ENCODE measurements at regions of chr10 and their contacts with region 1.

Region 1: DNA sequence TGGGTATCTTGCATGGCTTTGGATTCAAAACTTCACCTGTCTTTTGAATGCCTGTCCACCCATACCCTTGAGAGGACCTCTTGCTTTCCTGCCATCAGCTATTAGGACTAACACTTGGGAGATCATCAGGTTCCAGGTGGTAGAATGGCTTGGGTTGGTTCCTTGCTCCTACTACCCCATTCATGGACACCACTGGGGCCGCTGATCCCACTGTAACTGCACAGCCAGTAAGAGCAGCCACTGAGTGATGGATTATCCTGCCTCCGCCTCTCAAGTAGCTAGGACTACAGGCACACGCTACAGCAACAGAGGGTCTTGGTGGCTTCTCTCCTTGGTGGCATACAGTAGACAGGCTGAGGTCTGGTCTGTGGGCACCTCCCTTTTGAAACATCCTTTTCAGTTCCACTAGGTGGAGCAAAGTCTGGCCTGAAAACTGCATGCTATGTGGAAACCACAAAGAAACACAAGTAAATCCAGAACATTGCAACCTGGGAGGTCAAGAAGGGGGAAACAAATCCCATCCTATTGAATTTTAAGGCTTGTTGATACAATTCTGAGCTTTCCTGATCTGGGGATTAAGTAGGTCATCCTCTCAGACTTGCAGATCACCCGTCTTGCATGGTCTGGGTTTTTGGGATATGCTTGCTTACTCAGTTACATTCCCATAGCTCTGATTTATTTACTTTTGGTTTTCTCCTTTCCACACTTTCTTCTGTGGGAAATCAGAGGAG is 9.4 kb downstream of the WBP1L start:
- DNase-seq: peak; percentile 49 to 74 (median 71)
- H3K4me3 ChIP-seq: no peak overlapping the region
- H3K27ac ChIP-seq: no peak overlapping the region
- H3K4me1 ChIP-seq: peaks cover 0 to 10% (median 5%) of the 10 kb centered on the region in 4 experiments
- H3K27me3 ChIP-seq: no peaks in the 10 kb centered on the region

Region 2: GRCh38 chr10:102660888-102661657 is 92.0 kb before region 1 on chr10:
- CTCF ChIA-PET with region 1: no interaction called
- POLR2A ChIA-PET with region 1: no interaction called
- DNase-seq: peak; percentile 61 to 88 (median 85)
- H3K4me3 ChIP-seq: peak overlapping the region in 4 of 7 experiments; percentile 25 to 55 (median 39)
- H3K27ac ChIP-seq: no peak overlapping the region
- H3K4me1 ChIP-seq: peaks cover 2 to 35% (median 28%) of the 10 kb centered on the region in 4 experiments
- H3K27me3 ChIP-seq: no peaks in the 10 kb centered on the region

Region 3: DNA sequence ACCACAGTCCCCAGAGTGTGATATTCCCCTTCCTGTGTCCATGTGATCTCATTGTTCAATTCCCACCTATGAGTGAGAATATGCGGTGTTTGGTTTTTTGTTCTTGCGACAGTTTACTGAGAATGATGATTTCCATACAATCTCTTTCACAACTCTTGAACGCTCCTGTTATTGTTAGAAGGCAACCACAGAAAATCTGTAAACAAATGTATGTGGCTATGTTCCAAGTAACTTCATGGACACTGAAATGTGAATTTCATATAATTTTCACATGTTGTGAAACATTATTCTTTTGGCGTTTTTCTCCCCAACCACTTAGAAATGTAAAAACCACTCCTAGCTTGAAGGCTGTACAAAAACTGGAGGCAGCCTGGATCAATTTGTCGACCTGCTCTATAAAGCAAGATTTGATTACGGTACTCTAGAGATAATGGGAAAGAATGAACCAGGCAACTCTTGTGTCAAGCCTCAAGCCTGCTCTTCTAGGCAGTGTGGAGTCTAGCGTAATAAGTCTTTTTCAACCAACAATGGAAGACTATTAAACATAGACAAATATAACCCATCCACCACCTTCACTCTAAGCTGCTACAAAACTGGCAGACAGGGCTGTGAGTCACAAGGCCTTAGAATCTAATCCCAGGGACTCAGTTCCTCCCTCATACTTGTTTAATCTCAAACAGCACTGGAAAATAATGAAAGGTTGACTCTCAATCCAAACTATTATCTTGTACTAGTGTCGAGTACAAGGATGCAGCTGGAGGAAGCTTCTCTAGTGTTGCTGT is 61.6 kb before region 1 on chr10:
- CTCF ChIA-PET with region 1: no interaction called
- POLR2A ChIA-PET with region 1: no interaction called
- DNase-seq: no peak
- H3K4me3 ChIP-seq: no peak overlapping the region
- H3K27ac ChIP-seq: no peak overlapping the region
- H3K4me1 ChIP-seq: no peaks in the 10 kb centered on the region
- H3K27me3 ChIP-seq: no peaks in the 10 kb centered on the region

Region 4: GRCh38 chr10:102738692-102739121 is 14.4 kb before region 1 on chr10:
- CTCF ChIA-PET with region 1: interaction called, 34 read pairs
- POLR2A ChIA-PET with region 1: no interaction called
- DNase-seq: peak; percentile 36 to 85 (median 75)
- H3K4me3 ChIP-seq: peak overlapping the region in 3 of 7 experiments; percentile 25 to 50 (median 30)
- H3K27ac ChIP-seq: peak overlapping the region in 1 of 2 experiments; percentile 1
- H3K4me1 ChIP-seq: peaks cover 14 to 73% (median 39%) of the 10 kb centered on the region in 4 experiments
- H3K27me3 ChIP-seq: no peaks in the 10 kb centered on the region

Region 5: DNA sequence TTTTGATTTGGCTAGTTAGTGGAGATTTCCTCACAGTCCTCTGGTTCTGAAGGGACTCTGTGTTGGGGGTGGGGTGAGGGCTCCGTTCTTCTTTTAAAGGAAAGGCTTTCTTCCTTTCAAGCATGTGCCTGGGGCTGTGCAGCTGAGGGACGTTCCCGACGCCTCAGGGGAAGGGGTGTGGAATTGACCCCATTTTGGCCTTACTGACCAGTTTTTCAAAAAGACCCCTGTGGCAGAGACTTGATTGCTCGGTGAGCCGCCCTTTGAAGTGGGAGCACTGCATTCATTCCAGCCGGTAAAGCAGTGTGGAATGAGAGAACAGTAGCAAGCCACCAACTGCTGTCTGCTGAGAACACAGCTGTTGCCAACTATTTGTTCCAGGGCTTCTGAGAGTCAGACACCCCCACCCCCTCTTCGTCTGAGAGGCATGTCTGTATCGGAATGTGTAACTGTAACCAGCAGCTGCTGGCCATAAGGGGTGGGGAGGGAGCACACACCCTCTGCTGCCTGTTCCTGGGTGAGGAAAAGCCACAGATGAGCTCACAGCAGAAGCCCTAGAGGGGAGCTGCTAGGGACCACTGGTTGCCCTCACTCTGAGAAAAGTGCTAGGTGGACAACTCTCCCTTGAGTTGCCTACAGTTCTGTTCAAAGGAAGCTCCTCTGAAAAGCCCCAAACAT is 23.8 kb after region 1 on chr10:
- CTCF ChIA-PET with region 1: interaction called, 60 read pairs
- POLR2A ChIA-PET with region 1: interaction called, 3 read pairs
- DNase-seq: peak in 2 of 3 donors; percentile 29 to 54
- H3K4me3 ChIP-seq: peak overlapping the region in 1 of 7 experiments; percentile 33
- H3K27ac ChIP-seq: peak overlapping the region in 1 of 2 experiments; percentile 68
- H3K4me1 ChIP-seq: peaks cover 12 to 58% (median 48%) of the 10 kb centered on the region in 4 experiments
- H3K27me3 ChIP-seq: no peaks in the 10 kb centered on the region

Region 6: GRCh38 chr10:102835007-102835482 is 81.9 kb after region 1 on chr10:
- CTCF ChIA-PET with region 1: interaction called, 26 read pairs
- POLR2A ChIA-PET with region 1: no interaction called
- DNase-seq: peak; percentile 78 to 89 (median 83)
- H3K4me3 ChIP-seq: no peak overlapping the region
- H3K27ac ChIP-seq: no peak overlapping the region
- H3K4me1 ChIP-seq: peaks cover 0 to 9% (median 6%) of the 10 kb centered on the region in 4 experiments
- H3K27me3 ChIP-seq: peaks cover 0 to 2% (median 0%) of the 10 kb centered on the region in 5 experiments